ENCODE measurements at regions of chr6 and their contacts with region 1.

Region 1: DNA sequence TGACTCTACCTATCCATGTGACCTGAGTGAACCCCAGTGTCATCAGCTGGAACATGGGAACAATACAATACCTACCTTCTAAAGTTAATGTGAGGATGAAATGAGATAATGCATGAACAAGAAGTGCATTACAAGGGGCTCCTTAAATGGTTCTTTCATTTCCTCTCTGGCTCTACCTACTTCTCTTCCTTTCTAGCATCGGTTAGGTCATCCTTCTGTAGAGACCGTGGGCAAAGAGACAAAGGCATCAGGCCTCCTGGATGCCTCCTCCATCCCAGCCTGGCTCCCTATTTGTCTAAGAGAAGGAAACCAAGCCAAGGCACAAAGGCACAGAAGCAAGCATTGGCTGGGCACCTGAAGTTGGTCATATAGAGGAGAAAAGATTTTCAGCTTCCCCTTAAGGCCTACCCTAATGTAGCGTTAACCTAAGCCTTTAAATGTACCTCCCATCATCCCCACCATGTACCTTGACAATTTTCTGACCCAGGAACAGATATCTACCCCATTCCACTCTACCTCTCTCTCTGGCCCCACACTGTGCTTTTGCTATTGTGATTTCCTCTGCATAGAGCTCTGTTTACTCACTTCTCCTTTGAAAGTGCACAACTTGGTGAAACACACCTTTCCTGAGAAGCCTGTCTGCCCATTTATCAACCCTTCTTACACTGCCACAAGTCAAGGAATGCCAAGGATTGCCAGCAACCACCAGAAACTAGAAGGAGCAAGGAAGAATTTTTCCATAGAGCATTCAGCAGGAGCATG is 86.6 kb downstream of the GCLC start:
- DNase-seq: no peak
- H3K27ac ChIP-seq: no peak overlapping the region
- CTCF ChIP-seq: no peak

Region 2: DNA sequence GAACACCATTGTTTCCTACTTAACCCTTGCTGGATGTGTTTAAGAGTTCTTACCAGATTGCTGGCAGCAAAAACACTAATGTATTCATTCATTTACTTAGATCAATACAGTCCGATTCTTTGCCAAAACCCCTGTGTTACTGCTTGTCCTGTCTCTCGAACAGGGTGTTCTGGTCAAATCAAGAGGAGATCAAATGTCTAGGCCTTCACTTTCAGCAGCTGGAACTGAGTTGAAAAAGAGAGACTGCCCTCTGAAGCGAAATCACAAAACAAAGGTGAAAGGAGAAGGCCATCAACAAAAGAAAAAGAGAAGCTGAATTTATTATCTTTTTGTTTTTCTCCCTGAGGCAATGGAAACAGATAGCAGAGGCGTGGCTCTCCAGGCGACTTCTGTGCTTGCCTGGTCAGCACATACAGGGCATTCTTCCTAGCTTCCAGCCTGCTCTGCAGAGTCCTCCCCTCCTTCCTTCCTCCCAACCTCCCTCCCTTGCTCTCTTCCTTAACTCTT is 265.6 kb before region 1 on chr6:
- CTCF ChIA-PET with region 1: no interaction called
- POLR2A ChIA-PET with region 1: no interaction called
- DNase-seq: no peak
- H3K27ac ChIP-seq: no peak overlapping the region
- CTCF ChIP-seq: no peak

Region 3: GRCh38 chr6:53297004-53297403 is 161.3 kb before region 1 on chr6:
- CTCF ChIA-PET with region 1: no interaction called
- POLR2A ChIA-PET with region 1: interaction called, 15 read pairs
- DNase-seq: no peak
- H3K27ac ChIP-seq: no peak overlapping the region
- CTCF ChIP-seq: no peak